AG04449 (cell line): ENCODE measurements at regions of chr9 and their contacts with region 1.

Region 1: GRCh38 chr9:131762356-131762932 is 22.6 kb upstream of the RAPGEF1 start:
- DNase-seq: no peak
- H3K4me3 ChIP-seq: no peak overlapping the region
- CTCF ChIP-seq: peak; percentile 90

Region 2: GRCh38 chr9:131804826-131805225 is 42.4 kb after region 1 on chr9:
- CTCF ChIA-PET with region 1: interaction called, 11 read pairs
- POLR2A ChIA-PET with region 1: no interaction called
- DNase-seq: no peak
- H3K4me3 ChIP-seq: no peak overlapping the region
- CTCF ChIP-seq: no peak

Region 3: GRCh38 chr9:131915181-131915580 is 152.7 kb after region 1 on chr9:
- CTCF ChIA-PET with region 1: no interaction called
- POLR2A ChIA-PET with region 1: no interaction called
- DNase-seq: no peak
- H3K4me3 ChIP-seq: no peak overlapping the region
- CTCF ChIP-seq: no peak